Lower leg skin (tissue), 4 donors: ENCODE measurements at regions of chr10 and their contacts with region 1.

Region 1: DNA sequence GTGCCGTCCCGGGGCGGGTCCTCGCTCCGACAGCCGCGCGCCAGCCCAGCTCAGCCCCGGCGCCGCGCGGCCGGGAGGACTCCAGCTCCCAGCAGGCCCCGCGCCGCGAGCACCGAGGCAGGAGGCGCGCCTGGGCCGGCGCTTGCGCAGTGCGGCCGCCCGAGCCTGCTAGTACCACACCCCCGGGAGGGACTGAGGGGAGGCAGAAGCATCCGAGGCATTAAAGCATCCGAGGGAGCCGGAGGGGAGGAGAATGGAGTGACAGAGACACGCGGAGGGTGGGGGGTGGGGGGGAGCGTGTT is at the start of gene GRK5:
- DNase-seq: peak; percentile 92 to 98
- H3K4me3 ChIP-seq: peak within 1 kb of the TSS; percentile 84
- CTCF ChIP-seq: no peak
- POLR2A ChIP-seq: no peak
- total RNA-seq, gene GRK5: 5.4 to 13.0 (median 10.6) TPM

Region 2: DNA sequence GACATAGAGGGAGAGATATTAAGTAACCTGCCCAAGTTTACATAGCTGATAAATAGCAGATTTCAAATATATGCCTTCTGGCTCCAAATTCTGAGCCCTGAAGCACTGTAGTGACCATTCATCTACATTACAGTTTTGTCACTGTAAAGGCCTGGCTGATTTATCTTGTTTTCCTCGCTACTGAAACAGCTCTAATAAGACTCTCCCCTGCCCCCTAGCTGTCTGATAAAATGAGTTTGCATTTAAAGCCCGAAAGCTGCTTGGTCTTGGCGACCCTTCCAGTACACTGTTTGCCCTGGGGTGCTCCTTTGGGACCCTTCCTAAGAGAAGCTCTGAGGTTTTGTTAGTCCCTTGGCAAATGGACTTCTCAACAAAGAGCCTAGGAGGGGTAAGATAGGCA is 1100.9 kb before region 1 on chr10:
- intact Hi-C with region 1: no loop called
- DNase-seq: no peak
- H3K4me3 ChIP-seq: no peak overlapping the region
- CTCF ChIP-seq: no peak
- POLR2A ChIP-seq: no peak

Region 3: DNA sequence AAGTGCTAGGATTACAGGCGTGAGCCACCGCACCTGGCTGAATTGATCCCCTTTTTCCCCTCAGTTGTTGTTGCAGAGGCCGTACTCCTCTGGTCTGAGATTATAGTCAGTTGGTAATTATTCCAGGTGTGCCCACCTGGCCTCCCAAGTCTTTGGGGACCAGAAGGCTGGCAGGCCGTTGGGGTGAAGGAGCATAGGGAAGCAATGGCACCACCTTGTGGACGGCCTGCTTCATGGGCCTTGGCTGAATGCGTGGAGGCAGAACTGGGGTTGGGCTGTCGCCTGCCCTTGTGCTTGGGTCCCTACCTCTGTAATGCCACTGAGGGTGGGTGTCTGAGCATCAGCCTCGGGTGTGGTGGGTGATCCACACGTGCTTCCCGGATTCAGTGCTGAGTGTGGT is 209.5 kb after region 1 on chr10:
- intact Hi-C with region 1: loop called (anchors 10 kb)
- DNase-seq: peak in 1 of 2 donors; percentile 92
- H3K4me3 ChIP-seq: no peak overlapping the region
- CTCF ChIP-seq: no peak
- POLR2A ChIP-seq: no peak

Region 4: GRCh38 chr10:119445311-119445934 is 238.1 kb after region 1 on chr10:
- intact Hi-C with region 1: loop called (anchors 10 kb)
- DNase-seq: peak; percentile 73 to 97
- H3K4me3 ChIP-seq: no peak overlapping the region
- CTCF ChIP-seq: peak in 1 of 3 donors; percentile 50
- POLR2A ChIP-seq: no peak